ENCODE measurements at regions of chr2 and their contacts with region 1.

Region 1: GRCh38 chr2:241788572-241788971 is 11.9 kb downstream of the GAL3ST2 start:
- DNase-seq: peak; percentile 74
- H3K4me3 Mint-ChIP-seq: no peak overlapping the region
- H3K27ac Mint-ChIP-seq: peak overlapping the region; percentile 59
- H3K4me1 Mint-ChIP-seq: peaks cover 19% of the 10 kb centered on the region
- H3K27me3 Mint-ChIP-seq: peaks cover 2% of the 10 kb centered on the region

Region 2: DNA sequence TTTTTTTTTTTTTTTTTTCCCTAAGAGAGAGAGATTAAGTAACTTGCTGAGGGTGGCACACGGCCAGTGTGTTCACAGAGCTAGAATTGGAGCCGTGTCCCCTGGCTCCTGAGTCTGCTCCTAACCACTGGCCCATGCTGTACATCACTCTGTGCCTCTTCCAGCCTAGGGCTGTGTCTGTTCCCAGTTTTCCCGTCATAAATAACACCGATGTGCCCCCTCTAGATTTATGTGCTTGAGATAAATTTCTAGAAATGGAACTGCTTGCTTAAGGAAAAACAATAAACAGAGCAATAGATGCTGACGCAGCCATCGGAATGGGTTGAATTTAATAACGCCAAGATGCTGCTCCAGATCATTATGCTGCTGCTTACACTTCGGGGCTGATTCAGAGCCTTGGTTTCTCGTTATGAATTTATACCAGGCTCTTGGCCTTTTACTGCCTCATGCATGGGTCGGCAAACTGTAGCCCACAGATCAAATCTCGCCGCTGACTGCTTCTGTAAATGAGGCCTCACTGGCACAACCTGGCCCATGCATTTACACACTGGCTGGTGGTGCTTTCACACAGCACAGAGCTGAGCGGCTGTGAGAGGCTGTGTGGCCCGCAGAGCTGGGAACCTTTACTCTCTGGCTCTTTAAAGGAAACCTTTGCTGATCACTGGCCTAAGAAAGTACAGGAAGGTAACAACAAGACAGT is 1821.6 kb before region 1 on chr2:
- CTCF ChIA-PET with region 1: no interaction called
- POLR2A ChIA-PET with region 1: no interaction called
- intact Hi-C with region 1: no loop called
- DNase-seq: no peak
- H3K4me3 Mint-ChIP-seq: no peak overlapping the region
- H3K27ac Mint-ChIP-seq: no peak overlapping the region
- H3K4me1 Mint-ChIP-seq: no peaks in the 10 kb centered on the region
- H3K27me3 Mint-ChIP-seq: no peaks in the 10 kb centered on the region

Region 3: GRCh38 chr2:241771286-241772062 is 17.1 kb before region 1 on chr2:
- CTCF ChIA-PET with region 1: no interaction called
- POLR2A ChIA-PET with region 1: interaction called, 3 read pairs
- intact Hi-C with region 1: loop called (anchors 1 kb)
- DNase-seq: peak; percentile 8
- H3K4me3 Mint-ChIP-seq: no peak overlapping the region
- H3K27ac Mint-ChIP-seq: peak overlapping the region; percentile 21
- H3K4me1 Mint-ChIP-seq: peaks cover 6% of the 10 kb centered on the region
- H3K27me3 Mint-ChIP-seq: no peaks in the 10 kb centered on the region

Measured in activated CD4-positive, alpha-beta memory T cell treated with anti-CD3 and anti-CD28 coated beads for 36 hours (primary cell).